ENCODE measurements at regions of chr5 and their contacts with region 1.

Region 1: DNA sequence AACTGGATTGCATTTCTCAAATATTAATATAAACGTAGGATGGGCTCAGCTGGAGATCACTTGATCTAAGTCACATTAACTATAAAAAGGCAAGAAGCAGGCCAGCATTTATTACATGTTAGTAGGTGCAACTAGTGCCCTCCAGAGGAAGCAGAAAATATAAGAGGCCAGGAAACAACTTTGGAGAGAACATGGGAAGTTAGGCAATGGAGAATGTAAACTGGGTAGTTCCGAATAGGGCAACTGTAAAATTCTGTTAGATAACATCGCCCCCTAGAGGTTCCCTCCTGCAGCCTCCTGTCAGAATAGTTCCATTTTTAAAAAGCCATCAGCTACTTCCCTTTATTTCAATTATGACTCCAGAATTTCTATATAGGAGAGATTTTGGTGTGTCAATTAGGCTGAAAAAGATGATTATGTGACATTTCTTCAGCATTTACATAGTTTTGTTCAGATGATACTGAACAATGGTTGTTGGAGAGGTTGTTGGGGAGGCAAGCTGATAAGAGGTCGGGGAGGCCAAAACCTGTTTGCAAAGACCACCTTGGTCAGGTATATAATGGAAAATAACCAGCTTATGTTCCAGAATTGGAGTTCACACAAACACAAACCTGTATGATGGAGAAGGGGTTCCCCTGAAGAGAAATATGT is 22.4 kb downstream of the CCL28 start:
- DNase-seq: peak; percentile 71
- H3K4me3 ChIP-seq: no peak overlapping the region
- CTCF ChIP-seq: peak; percentile 64

Region 2: DNA sequence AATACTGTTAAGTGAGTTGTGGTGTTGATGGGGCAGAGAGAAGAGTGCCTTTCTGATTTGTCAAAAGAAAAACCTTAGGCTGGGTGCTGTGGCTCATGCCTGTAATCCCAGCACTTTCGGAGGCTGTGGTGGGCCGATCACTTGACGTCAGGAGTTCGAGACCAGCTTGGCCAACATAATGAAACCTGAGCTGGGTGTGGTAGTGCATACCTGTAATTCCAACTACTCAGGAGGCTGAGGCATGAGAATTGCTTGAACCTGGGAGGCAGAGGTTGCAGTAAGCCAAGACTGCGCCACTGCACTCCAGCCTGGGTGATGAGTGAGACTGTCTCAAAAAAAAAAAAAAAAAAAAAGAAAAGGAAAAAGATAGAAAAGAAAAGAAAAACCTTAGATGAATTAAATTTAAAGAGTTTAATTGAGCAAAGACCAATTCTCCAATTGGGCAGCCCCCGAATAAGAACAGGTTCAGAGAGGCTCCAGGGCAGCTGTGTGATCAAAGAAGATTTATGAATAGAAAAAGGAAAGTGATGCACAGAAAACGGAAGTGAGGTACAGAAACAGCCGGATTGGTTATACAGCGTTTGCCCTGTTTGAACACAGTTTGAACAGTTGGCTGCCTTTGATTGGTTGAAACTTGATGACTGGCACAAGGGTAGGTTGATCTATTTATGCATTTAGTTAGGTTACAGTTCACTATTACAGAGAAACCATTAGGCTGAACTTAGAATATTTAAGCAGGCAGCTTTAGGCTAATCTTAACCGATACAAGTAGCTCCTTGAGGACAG is 168.5 kb before region 1 on chr5:
- CTCF ChIA-PET with region 1: interaction called, 27 read pairs
- POLR2A ChIA-PET with region 1: no interaction called
- DNase-seq: no peak
- H3K4me3 ChIP-seq: no peak overlapping the region
- CTCF ChIP-seq: no peak

Region 3: GRCh38 chr5:43227655-43228054 is 162.1 kb before region 1 on chr5:
- CTCF ChIA-PET with region 1: interaction called, 27 read pairs
- POLR2A ChIA-PET with region 1: no interaction called
- DNase-seq: no peak
- H3K4me3 ChIP-seq: no peak overlapping the region
- CTCF ChIP-seq: no peak

Region 4: GRCh38 chr5:43332396-43332795 is 57.4 kb before region 1 on chr5:
- CTCF ChIA-PET with region 1: no interaction called
- POLR2A ChIA-PET with region 1: no interaction called
- DNase-seq: no peak
- H3K4me3 ChIP-seq: no peak overlapping the region
- CTCF ChIP-seq: no peak

Region 5: GRCh38 chr5:43376496-43377140 is 13.2 kb before region 1 on chr5:
- CTCF ChIA-PET with region 1: interaction called, 25 read pairs
- POLR2A ChIA-PET with region 1: no interaction called
- DNase-seq: no peak
- H3K4me3 ChIP-seq: no peak overlapping the region
- CTCF ChIP-seq: no peak

Region 6: GRCh38 chr5:43401827-43402226 is 12.0 kb after region 1 on chr5:
- CTCF ChIA-PET with region 1: interaction called, 24 read pairs
- POLR2A ChIA-PET with region 1: no interaction called
- DNase-seq: no peak
- H3K4me3 ChIP-seq: no peak overlapping the region
- CTCF ChIP-seq: peak; percentile 25